Right ventricle myocardium inferior (tissue), 1 donor: ENCODE measurements at regions of chr2 and their contacts with region 1.

Region 1: GRCh38 chr2:58448065-58448507 is 207.0 kb upstream of the FANCL start:
- DNase-seq: peak; percentile 66
- ATAC-seq: peak; percentile 65

Region 2: DNA sequence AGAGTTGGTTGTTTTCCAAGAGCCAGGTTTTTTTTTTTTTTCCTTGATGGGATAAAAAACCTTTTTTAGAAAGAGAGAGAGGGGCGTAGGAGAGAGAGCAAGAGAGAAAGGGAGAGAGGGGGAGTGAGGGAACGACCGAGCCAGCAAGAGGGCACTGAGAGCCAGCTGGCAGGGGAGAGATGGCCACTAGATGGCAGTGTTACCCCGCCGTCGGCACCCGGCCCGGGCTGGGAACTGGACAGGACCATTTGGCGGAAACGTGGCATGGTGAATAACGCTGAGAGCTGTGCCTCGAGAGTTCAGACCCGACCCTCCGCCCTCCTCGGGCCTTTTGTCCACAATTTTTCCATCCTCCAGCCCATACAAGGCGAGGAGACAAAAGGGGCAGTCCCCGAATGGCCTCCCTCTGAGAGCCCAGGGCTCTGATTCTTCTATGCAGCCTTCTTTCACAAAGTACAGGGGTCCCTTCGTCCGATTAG is 688.2 kb before region 1 on chr2:
- intact Hi-C with region 1: loop called (anchors 10 kb)
- DNase-seq: peak; percentile 89
- ATAC-seq: peak; percentile 94

Region 3: DNA sequence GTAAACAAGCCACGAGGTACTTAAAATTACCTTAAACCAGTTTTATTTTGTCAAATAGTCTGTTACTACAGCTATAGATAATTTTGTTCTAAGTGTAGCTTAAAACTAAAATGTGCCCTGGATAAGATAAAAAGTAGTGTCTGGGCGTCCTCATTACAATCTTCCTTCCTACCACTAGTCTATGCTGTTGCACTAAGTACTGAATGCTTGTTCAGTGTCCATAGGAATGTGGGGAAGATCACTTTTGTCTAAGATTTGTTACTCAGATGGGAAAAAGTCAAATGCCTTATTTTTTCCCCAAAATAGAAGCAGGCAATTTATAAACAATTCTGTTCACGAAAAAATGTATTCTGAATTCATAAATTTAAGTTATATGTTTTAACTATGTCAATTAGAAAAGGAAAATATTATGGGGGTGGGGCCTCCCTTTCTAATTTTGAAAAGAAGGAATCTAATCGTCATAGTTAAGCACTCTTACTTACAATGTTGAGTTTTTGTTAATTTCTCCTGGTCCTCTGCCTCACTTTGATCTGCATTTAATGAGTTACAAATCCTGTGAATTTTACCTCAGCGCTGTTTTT is 541.8 kb before region 1 on chr2:
- intact Hi-C with region 1: loop called (anchors 5 kb)
- DNase-seq: no peak
- ATAC-seq: peak; percentile 60